ENCODE measurements at regions of chr1 and their contacts with region 1.

Region 1: GRCh38 chr1:91511386-91511785 is 10.7 kb downstream of the CDC7 start:
- DNase-seq: peak in 3 of 14 experiments; percentile 63 to 70 (median 68)
- ATAC-seq: peak; percentile 58
- H3K4me3 ChIP-seq: no peak overlapping the region
- H3K4me3 Mint-ChIP-seq: no peak overlapping the region
- H3K27ac ChIP-seq: no peak overlapping the region
- H3K27ac Mint-ChIP-seq: no peak overlapping the region
- H3K4me1 ChIP-seq: no peaks in the 10 kb centered on the region
- H3K4me1 Mint-ChIP-seq: peaks cover 6% of the 10 kb centered on the region
- H3K27me3 ChIP-seq: no peaks in the 10 kb centered on the region
- H3K27me3 Mint-ChIP-seq: no peaks in the 10 kb centered on the region
- CTCF ChIP-seq: peak; percentile 74

Region 2: GRCh38 chr1:91282695-91283420 is 228.5 kb before region 1 on chr1:
- CTCF ChIA-PET with region 1: no interaction called
- POLR2A ChIA-PET with region 1: no interaction called
- intact Hi-C with region 1: loop called (anchors 2 to 5 kb)
- DNase-seq: peak in 12 of 14 experiments; percentile 2 to 67 (median 22)
- ATAC-seq: no peak
- H3K4me3 ChIP-seq: no peak overlapping the region
- H3K4me3 Mint-ChIP-seq: no peak overlapping the region
- H3K27ac ChIP-seq: no peak overlapping the region
- H3K27ac Mint-ChIP-seq: no peak overlapping the region
- H3K4me1 ChIP-seq: no peaks in the 10 kb centered on the region
- H3K4me1 Mint-ChIP-seq: no peaks in the 10 kb centered on the region
- H3K27me3 ChIP-seq: no peaks in the 10 kb centered on the region
- H3K27me3 Mint-ChIP-seq: peaks cover 11% of the 10 kb centered on the region
- CTCF ChIP-seq: peak; percentile 69

Region 3: DNA sequence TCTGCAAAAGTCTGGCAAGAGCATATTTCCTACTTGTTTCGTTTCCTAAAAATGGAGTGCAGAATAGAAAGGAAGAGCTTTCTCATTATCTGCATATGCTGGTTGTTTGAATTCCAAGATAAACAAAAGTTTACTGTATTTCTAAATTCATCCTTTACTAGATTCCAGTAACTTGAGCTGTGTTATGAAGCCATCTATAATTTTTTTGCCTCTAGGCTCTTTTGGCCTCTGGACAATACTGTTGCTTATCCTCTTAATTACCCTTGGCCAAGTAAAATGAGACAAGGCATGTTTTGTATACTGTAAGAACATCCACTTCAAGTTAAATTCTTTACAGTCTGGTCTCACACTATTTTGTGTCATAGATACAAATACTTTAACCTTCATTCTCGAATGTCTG is 61.1 kb before region 1 on chr1:
- CTCF ChIA-PET with region 1: no interaction called
- POLR2A ChIA-PET with region 1: no interaction called
- intact Hi-C with region 1: no loop called
- DNase-seq: no peak
- ATAC-seq: no peak
- H3K4me3 ChIP-seq: no peak overlapping the region
- H3K4me3 Mint-ChIP-seq: no peak overlapping the region
- H3K27ac ChIP-seq: no peak overlapping the region
- H3K27ac Mint-ChIP-seq: no peak overlapping the region
- H3K4me1 ChIP-seq: no peaks in the 10 kb centered on the region
- H3K4me1 Mint-ChIP-seq: no peaks in the 10 kb centered on the region
- H3K27me3 ChIP-seq: peaks cover 0 to 4% of the 10 kb centered on the region in 2 experiments
- H3K27me3 Mint-ChIP-seq: no peaks in the 10 kb centered on the region
- CTCF ChIP-seq: no peak

Region 4: GRCh38 chr1:91591175-91591968 is 80.0 kb after region 1 on chr1:
- CTCF ChIA-PET with region 1: no interaction called
- POLR2A ChIA-PET with region 1: no interaction called
- intact Hi-C with region 1: loop called in 1 of 2 experiments (anchors 10 kb)
- DNase-seq: peak in 5 of 14 experiments; percentile 4 to 28 (median 24)
- ATAC-seq: peak; percentile 52
- H3K4me3 ChIP-seq: peak overlapping the region; percentile 21
- H3K4me3 Mint-ChIP-seq: peak overlapping the region; percentile 76
- H3K27ac ChIP-seq: no peak overlapping the region
- H3K27ac Mint-ChIP-seq: no peak overlapping the region
- H3K4me1 ChIP-seq: peaks cover 16% of the 10 kb centered on the region
- H3K4me1 Mint-ChIP-seq: peaks cover 20% of the 10 kb centered on the region
- H3K27me3 ChIP-seq: no peaks in the 10 kb centered on the region
- H3K27me3 Mint-ChIP-seq: no peaks in the 10 kb centered on the region
- CTCF ChIP-seq: no peak

Region 5: DNA sequence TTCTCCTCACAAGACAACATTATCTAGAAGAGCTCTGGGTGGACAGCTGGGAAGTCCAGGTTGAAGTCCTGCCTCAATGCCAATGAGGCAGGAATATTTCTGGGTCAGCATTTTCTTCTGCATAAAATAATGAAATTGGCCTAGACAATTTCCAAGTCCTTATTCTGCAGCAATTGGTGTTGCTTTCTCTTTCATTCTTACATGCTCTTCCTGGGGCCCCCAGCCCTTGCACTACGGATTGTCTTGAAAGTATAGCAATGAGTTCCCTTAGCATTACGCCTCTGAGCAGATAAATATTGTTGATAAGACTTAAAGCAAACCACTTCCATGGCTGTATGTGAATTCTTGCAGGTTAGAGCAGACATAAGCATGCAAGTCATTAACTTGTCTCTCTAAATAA is 186.0 kb after region 1 on chr1:
- CTCF ChIA-PET with region 1: no interaction called
- POLR2A ChIA-PET with region 1: no interaction called
- intact Hi-C with region 1: no loop called
- DNase-seq: peak in 9 of 14 experiments; percentile 17 to 80 (median 33)
- ATAC-seq: peak; percentile 97
- H3K4me3 ChIP-seq: no peak overlapping the region
- H3K4me3 Mint-ChIP-seq: peak overlapping the region; percentile 43
- H3K27ac ChIP-seq: peak overlapping the region; percentile 1 to 54
- H3K27ac Mint-ChIP-seq: peak overlapping the region; percentile 64
- H3K4me1 ChIP-seq: peaks cover 8% of the 10 kb centered on the region
- H3K4me1 Mint-ChIP-seq: peaks cover 30% of the 10 kb centered on the region
- H3K27me3 ChIP-seq: no peaks in the 10 kb centered on the region
- H3K27me3 Mint-ChIP-seq: no peaks in the 10 kb centered on the region
- CTCF ChIP-seq: no peak

Region 6: DNA sequence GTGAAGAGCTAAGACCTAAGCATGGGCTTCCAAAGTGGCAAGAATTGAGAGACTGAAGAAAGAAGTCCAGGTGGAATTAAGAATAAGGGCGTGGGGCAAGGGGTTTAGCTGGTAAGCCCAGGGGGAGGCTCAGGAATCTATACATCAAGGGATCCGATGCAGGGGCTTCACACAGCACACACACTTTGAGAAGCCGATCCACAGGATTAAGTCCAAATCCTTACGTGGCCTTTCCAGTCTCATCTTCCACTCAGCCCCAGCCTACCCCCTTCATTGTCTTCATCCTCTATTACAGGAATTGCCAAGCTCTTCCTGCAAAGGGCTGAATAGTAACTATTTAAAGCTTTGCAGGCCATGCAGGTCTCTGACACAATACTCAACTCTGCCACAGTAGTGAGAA is 273.2 kb after region 1 on chr1:
- CTCF ChIA-PET with region 1: no interaction called
- POLR2A ChIA-PET with region 1: interaction called, 4 read pairs
- intact Hi-C with region 1: loop called in 1 of 2 experiments (anchors 5 kb)
- DNase-seq: no peak
- ATAC-seq: no peak
- H3K4me3 ChIP-seq: no peak overlapping the region
- H3K4me3 Mint-ChIP-seq: no peak overlapping the region
- H3K27ac ChIP-seq: no peak overlapping the region
- H3K27ac Mint-ChIP-seq: no peak overlapping the region
- H3K4me1 ChIP-seq: no peaks in the 10 kb centered on the region
- H3K4me1 Mint-ChIP-seq: peaks cover 2% of the 10 kb centered on the region
- H3K27me3 ChIP-seq: no peaks in the 10 kb centered on the region
- H3K27me3 Mint-ChIP-seq: no peaks in the 10 kb centered on the region
- CTCF ChIP-seq: no peak

Region 7: DNA sequence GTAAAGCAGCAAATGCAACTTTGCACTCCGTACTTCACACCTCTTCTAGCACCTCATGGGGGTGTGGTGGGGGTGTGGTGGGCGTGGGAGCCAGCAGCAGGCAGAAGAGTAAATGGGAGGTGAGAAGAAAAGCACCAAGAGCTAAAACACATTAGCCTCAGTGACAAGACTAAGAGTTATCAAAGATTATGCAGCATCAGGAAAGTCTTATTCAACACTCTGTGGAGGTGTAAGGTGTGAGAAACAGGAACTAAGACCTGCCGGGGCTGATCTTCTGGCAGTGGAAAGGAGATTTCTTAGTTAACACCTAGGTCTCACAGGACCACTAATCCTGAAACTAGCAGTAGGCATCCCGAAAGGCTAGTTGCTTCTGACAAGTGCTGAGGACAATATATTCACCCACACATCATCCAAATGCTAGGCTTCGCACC is 364.7 kb after region 1 on chr1:
- CTCF ChIA-PET with region 1: no interaction called
- POLR2A ChIA-PET with region 1: no interaction called
- intact Hi-C with region 1: loop called in 1 of 2 experiments (anchors 5 kb)
- DNase-seq: peak in 2 of 14 experiments; percentile 37 to 52
- ATAC-seq: peak; percentile 21
- H3K4me3 ChIP-seq: no peak overlapping the region
- H3K4me3 Mint-ChIP-seq: no peak overlapping the region
- H3K27ac ChIP-seq: no peak overlapping the region
- H3K27ac Mint-ChIP-seq: no peak overlapping the region
- H3K4me1 ChIP-seq: peaks cover 34% of the 10 kb centered on the region
- H3K4me1 Mint-ChIP-seq: peaks cover 59% of the 10 kb centered on the region
- H3K27me3 ChIP-seq: no peaks in the 10 kb centered on the region
- H3K27me3 Mint-ChIP-seq: no peaks in the 10 kb centered on the region
- CTCF ChIP-seq: no peak

Region 8: GRCh38 chr1:91924146-91924545 is 412.8 kb after region 1 on chr1:
- CTCF ChIA-PET with region 1: interaction called, 18 read pairs
- POLR2A ChIA-PET with region 1: interaction called, 3 read pairs
- intact Hi-C with region 1: loop called (anchors 1 kb)
- DNase-seq: no peak
- ATAC-seq: no peak
- H3K4me3 ChIP-seq: no peak overlapping the region
- H3K4me3 Mint-ChIP-seq: no peak overlapping the region
- H3K27ac ChIP-seq: no peak overlapping the region
- H3K27ac Mint-ChIP-seq: no peak overlapping the region
- H3K4me1 ChIP-seq: no peaks in the 10 kb centered on the region
- H3K4me1 Mint-ChIP-seq: no peaks in the 10 kb centered on the region
- H3K27me3 ChIP-seq: no peaks in the 10 kb centered on the region
- H3K27me3 Mint-ChIP-seq: no peaks in the 10 kb centered on the region
- CTCF ChIP-seq: no peak

Measured in CD4-positive, alpha-beta T cell (primary cell).